Activated CD4-positive, alpha-beta T cell treated with anti-CD3 and anti-CD28 coated beads for 36 hours (primary cell): ENCODE measurements at regions of chr17 and their contacts with region 1.

Region 1: DNA sequence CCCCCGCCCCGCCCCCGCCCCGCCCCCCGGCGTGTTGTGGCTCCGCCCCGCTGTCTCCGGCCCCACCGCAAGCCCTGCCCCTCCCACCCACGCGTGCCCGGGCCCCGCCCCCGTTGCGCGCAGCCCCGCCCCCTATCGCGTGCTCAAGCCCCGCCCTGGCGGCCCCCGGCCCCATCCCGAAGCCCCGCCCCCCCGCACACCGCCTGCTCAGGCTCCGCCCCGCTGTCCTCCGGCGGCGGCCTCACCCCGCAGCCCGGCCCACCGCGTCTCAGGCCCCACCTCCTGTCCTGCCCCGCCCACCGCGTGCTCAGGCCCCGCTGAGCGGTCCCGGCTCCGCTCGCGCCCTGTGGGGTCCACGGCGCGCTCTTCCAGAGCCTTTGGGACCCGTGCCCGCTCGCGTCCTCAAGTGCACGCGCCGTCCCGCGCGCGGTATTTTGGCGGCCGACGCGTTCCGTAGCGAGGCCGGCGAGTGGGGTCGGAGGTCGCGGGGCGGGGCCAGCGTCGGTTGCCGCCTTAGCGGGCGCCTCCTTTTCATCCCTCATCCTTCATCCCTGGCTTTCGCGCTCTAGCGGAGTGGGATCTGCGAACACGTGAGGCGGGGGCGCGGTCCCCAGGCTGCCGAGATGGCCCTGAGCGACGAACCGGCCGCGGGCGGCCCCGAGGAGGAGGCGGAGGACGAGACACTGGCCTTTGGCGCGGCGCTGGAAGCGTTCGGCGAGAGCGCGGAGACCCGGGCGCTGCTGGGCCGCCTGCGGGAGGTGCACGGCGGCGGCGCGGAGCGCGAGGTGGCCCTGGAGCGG is at the start of gene TBCD:
- DNase-seq: peak; percentile 95
- ATAC-seq: peak; percentile 83
- H3K4me3 Mint-ChIP-seq: peak within 1 kb of the TSS; percentile 84
- H3K27ac Mint-ChIP-seq: peak within 1 kb of the TSS; percentile 13
- H3K4me1 Mint-ChIP-seq: peaks cover 26% of the 10 kb centered on the region
- H3K27me3 Mint-ChIP-seq: no peaks in the 10 kb centered on the region
- total RNA-seq, gene TBCD: 83.3 to 97.2 TPM

Region 2: GRCh38 chr17:82698065-82698973 is 53.5 kb before region 1 on chr17 and contains the start of gene RAB40B:
- CTCF ChIA-PET with region 1: interaction called, 3 read pairs
- POLR2A ChIA-PET with region 1: no interaction called
- intact Hi-C with region 1: loop called in 1 of 2 experiments (anchors 1 kb)
- DNase-seq: peak; percentile 99
- ATAC-seq: peak; percentile 99
- H3K4me3 Mint-ChIP-seq: peak within 1 kb of the TSS; percentile 67
- H3K27ac Mint-ChIP-seq: peak within 1 kb of the TSS; percentile 51
- H3K4me1 Mint-ChIP-seq: peaks cover 10% of the 10 kb centered on the region
- H3K27me3 Mint-ChIP-seq: peaks cover 3% of the 10 kb centered on the region
- total RNA-seq, gene RAB40B: 3.2 to 4.1 TPM

Region 3: DNA sequence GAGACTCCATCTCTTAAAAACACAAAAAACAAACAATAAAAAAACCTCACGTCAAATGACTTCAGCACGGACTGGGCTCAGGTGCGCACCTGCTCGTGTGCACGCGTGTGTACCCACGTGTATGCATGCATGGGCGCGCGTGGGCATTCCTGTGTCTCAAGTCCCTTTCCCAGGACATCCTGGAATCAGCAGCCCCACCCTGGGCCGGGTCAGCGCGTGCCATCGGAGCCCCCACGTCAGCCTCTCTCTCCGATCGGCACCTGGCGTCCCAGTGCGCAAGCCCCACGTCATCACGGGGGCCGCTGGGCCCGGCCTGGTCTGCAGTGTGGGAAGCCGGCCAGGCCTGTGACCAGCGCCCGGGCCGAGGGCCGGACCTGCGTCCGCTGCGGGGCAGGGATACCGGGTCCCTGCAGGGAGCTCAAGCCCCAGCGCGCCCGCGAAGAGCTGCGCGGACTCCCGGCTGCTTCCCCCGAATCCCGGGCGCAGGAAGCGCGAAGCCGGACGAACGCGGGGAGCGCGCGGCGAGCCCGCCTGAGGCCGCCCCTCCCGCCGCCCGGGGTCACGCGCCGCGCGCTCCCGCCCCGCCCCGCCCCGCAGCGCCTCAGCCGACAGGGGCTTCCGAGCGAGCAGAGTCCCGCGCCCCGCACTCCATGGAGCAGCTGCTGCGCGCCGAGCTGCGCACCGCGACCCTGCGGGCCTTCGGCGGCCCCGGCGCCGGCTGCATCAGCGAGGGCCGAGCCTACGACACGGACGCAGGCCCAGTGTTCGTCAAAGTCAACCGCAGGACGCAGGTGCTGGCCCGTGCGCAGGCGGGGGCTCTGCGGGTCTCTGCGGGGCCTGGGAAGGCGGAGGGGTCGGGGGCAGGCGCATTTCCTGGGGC is 16.5 kb before region 1 on chr17 and contains the start of gene FN3K:
- CTCF ChIA-PET with region 1: no interaction called
- POLR2A ChIA-PET with region 1: no interaction called
- intact Hi-C with region 1: loop called in 1 of 2 experiments (anchors 2 kb)
- DNase-seq: peak; percentile 49
- ATAC-seq: peak; percentile 70
- H3K4me3 Mint-ChIP-seq: peak within 1 kb of the TSS; percentile 49
- H3K27ac Mint-ChIP-seq: peak within 1 kb of the TSS; percentile 25
- H3K4me1 Mint-ChIP-seq: peaks cover 2% of the 10 kb centered on the region
- H3K27me3 Mint-ChIP-seq: no peaks in the 10 kb centered on the region
- total RNA-seq, gene FN3K: 2.1 TPM